Naive thymus-derived CD4-positive, alpha-beta T cell (primary cell): ENCODE measurements at regions of chr13 and their contacts with region 1.

Region 1: DNA sequence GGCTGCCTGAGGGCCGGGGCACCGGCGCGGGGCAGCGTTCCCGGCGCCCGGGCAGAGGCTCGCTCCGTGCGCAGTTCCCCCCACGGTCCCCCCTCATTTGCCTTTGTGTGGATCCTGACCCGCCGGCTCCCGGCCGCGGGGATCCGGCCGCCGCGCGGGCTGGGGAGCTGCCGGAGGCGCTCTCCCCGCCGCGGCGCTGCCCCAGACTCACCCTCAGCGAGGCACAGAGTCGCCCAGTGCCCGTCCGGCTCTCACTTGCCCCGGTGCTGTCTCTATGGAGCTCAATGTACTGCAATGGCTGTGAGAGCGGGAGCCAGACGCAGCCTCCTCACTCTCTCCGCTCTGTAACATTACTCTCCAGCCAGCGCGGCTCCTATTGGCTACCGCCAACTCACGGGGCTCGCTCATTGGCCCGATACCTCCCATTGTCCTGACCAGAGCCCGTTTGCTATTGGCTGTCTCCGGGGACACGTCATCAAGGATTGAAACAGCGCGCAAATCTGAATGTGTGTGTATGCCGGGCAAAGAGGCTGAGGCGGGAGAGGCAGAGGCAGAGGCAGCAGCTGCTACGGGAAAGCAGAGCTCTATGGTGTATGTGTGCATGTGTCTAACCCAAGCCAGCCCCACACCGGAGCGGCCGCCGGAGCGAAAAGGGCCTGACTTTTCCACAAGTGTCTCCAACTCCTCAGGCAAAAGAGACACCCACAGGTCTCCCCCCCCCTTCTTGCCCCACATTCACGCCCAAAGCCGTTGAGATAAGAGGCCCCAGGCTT is at the start of gene HMGB1:
- DNase-seq: peak; percentile 84 to 98 (median 96)
- ATAC-seq: peak; percentile 90
- H3K4me3 ChIP-seq: peak within 1 kb of the TSS; percentile 83
- H3K4me3 Mint-ChIP-seq: peak within 1 kb of the TSS; percentile 86 to 99 (median 94)
- H3K27ac ChIP-seq: peak within 1 kb of the TSS; percentile 97
- H3K27ac Mint-ChIP-seq: peak within 1 kb of the TSS; percentile 93 to 100 (median 98)
- H3K4me1 ChIP-seq: peaks cover 23 to 32% of the 10 kb centered on the region in 2 donors
- H3K4me1 Mint-ChIP-seq: peaks cover 12 to 40% (median 30%) of the 10 kb centered on the region in 7 donors
- H3K27me3 ChIP-seq: no peaks in the 10 kb centered on the region
- H3K27me3 Mint-ChIP-seq: peaks cover 0 to 7% (median 0%) of the 10 kb centered on the region in 5 donors
- total RNA-seq, gene HMGB1: 294 to 530 (median 319) TPM

Region 2: GRCh38 chr13:29508130-29508875 is 957.5 kb before region 1 on chr13:
- CTCF ChIA-PET with region 1: no interaction called
- POLR2A ChIA-PET with region 1: no interaction called
- intact Hi-C with region 1: loop called in 1 of 2 experiments (anchors 5 kb)
- DNase-seq: peak; percentile 32 to 74 (median 61)
- ATAC-seq: peak; percentile 76
- H3K4me3 ChIP-seq: no peak overlapping the region
- H3K4me3 Mint-ChIP-seq: no peak overlapping the region
- H3K27ac ChIP-seq: no peak overlapping the region
- H3K27ac Mint-ChIP-seq: peak overlapping the region in 1 of 9 donors; percentile 21
- H3K4me1 ChIP-seq: no peaks in the 10 kb centered on the region
- H3K4me1 Mint-ChIP-seq: peaks cover 0 to 2% (median under 1%) of the 10 kb centered on the region in 7 donors
- H3K27me3 ChIP-seq: no peaks in the 10 kb centered on the region
- H3K27me3 Mint-ChIP-seq: peaks cover 3 to 6% (median 5%) of the 10 kb centered on the region in 5 donors

Region 3: DNA sequence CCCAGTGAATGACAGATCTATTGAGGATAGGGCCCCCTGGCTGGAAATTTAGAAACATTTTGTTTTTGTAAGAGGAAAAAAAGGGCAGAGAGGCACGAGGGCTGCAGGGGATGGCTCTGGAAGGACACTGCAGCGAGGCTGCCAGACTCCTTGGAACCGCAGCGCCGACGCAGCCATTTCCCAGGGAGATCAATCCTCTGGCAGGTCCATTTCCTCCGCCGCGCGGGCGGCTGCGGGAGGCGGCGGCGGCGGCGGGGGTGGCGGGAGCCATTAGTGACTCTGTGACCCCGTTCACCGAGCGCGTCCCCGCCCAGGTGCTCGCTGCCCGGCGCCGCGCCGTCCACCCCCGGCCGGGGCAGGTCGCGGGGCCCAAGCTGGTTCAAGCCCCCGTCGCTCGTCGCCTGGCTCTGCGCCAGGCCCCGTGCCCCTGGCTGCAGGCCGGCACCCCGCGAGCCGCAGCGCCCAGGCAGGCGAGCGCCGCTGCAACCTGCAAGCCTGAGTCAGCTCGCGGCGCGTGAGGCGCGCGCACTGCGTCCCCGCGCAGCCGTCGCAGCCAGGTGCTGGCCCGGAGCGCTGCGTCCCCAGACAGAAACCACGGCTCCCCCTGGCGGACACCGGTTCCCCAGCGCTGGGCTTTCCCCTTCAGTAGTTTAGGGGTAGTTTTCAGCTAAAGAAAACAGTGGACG is 351.1 kb before region 1 on chr13:
- CTCF ChIA-PET with region 1: interaction called, 3 read pairs
- POLR2A ChIA-PET with region 1: interaction called, 6 read pairs
- intact Hi-C with region 1: loop called (anchors 1 kb)
- DNase-seq: peak; percentile 81 to 94 (median 91)
- ATAC-seq: peak; percentile 95
- H3K4me3 ChIP-seq: peak overlapping the region; percentile 48
- H3K4me3 Mint-ChIP-seq: peak overlapping the region; percentile 74 to 89 (median 84)
- H3K27ac ChIP-seq: peak overlapping the region; percentile 39
- H3K27ac Mint-ChIP-seq: peak overlapping the region in 8 of 9 donors; percentile 43 to 90 (median 80)
- H3K4me1 ChIP-seq: peaks cover 10 to 17% of the 10 kb centered on the region in 2 donors
- H3K4me1 Mint-ChIP-seq: peaks cover 17 to 41% (median 34%) of the 10 kb centered on the region in 7 donors
- H3K27me3 ChIP-seq: no peaks in the 10 kb centered on the region
- H3K27me3 Mint-ChIP-seq: peaks cover 0 to 11% (median 0%) of the 10 kb centered on the region in 5 donors

Region 4: GRCh38 chr13:30257468-30258099 is 208.2 kb before region 1 on chr13:
- CTCF ChIA-PET with region 1: no interaction called
- POLR2A ChIA-PET with region 1: no interaction called
- intact Hi-C with region 1: loop called in 1 of 2 experiments (anchors 1 kb)
- DNase-seq: no peak
- ATAC-seq: no peak
- H3K4me3 ChIP-seq: no peak overlapping the region
- H3K4me3 Mint-ChIP-seq: no peak overlapping the region
- H3K27ac ChIP-seq: no peak overlapping the region
- H3K27ac Mint-ChIP-seq: peak overlapping the region in 2 of 9 donors; percentile 18 to 62
- H3K4me1 ChIP-seq: no peaks in the 10 kb centered on the region
- H3K4me1 Mint-ChIP-seq: peaks cover 0 to 21% (median 14%) of the 10 kb centered on the region in 7 donors
- H3K27me3 ChIP-seq: no peaks in the 10 kb centered on the region
- H3K27me3 Mint-ChIP-seq: no peaks in the 10 kb centered on the region

Region 5: GRCh38 chr13:30388406-30389283 is 77.1 kb before region 1 on chr13:
- CTCF ChIA-PET with region 1: interaction called, 8 read pairs
- POLR2A ChIA-PET with region 1: interaction called, 4 read pairs
- intact Hi-C with region 1: loop called in 1 of 2 experiments (anchors 1 kb)
- DNase-seq: no peak
- ATAC-seq: peak; percentile 13
- H3K4me3 ChIP-seq: peak overlapping the region; percentile 41
- H3K4me3 Mint-ChIP-seq: peak overlapping the region; percentile 67 to 93 (median 78)
- H3K27ac ChIP-seq: peak overlapping the region; percentile 51
- H3K27ac Mint-ChIP-seq: peak overlapping the region; percentile 68 to 95 (median 90)
- H3K4me1 ChIP-seq: peaks cover 6 to 40% of the 10 kb centered on the region in 2 donors
- H3K4me1 Mint-ChIP-seq: peaks cover 26 to 68% (median 57%) of the 10 kb centered on the region in 7 donors
- H3K27me3 ChIP-seq: no peaks in the 10 kb centered on the region
- H3K27me3 Mint-ChIP-seq: no peaks in the 10 kb centered on the region

Region 6: GRCh38 chr13:30529085-30529834 is 63.5 kb after region 1 on chr13:
- CTCF ChIA-PET with region 1: no interaction called
- POLR2A ChIA-PET with region 1: no interaction called
- intact Hi-C with region 1: loop called in 1 of 2 experiments (anchors 2 kb)
- DNase-seq: no peak
- ATAC-seq: no peak
- H3K4me3 ChIP-seq: no peak overlapping the region
- H3K4me3 Mint-ChIP-seq: no peak overlapping the region
- H3K27ac ChIP-seq: no peak overlapping the region
- H3K27ac Mint-ChIP-seq: no peak overlapping the region
- H3K4me1 ChIP-seq: peaks cover 0 to 4% of the 10 kb centered on the region in 2 donors
- H3K4me1 Mint-ChIP-seq: peaks cover 5 to 18% (median 12%) of the 10 kb centered on the region in 7 donors
- H3K27me3 ChIP-seq: no peaks in the 10 kb centered on the region
- H3K27me3 Mint-ChIP-seq: no peaks in the 10 kb centered on the region

Region 7: DNA sequence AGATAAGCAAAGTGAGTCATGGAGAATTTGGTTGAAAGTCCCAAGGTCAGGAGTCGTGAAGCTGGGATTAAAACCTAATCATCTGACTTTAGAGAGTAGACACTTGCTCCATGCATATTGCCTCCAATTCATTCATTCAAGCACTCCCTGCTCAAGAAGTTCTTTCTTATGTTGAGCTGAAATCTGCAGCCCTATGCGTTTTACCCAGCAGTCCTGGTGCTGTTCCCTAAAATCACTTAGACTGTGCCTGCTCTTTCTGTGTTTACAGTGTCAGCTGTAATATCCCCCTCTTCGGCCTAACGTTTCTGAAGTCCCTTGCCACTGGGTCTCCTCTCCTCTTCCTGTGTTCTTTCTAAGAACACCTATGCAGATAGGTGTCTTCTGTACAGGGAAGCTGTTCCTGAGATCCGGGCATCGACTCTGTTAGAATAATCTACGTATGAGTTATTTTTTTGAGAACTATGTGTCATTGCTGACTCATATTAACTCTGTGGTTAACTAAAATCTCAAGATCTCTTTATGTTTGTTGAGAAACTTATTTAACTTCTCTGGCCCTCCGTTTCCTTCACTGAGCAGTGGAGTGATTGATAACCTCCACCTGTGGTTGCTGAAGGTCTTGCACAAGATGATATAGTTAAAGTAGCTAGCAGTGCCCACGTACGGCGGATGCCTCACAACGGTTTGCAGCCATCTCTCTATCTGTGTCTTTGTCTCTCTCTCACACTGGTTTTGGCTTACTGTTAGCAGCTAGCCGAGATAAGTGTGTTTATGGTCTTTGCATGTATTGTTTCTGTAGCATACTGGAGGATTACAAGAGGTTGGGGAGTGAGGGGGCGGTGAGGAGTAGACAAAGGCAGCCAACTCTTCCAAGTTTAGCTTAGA is 274.2 kb after region 1 on chr13:
- CTCF ChIA-PET with region 1: no interaction called
- POLR2A ChIA-PET with region 1: interaction called, 3 read pairs
- intact Hi-C with region 1: loop called (anchors 1 to 2 kb)
- DNase-seq: peak in 8 of 9 donors; percentile 16 to 61 (median 32)
- ATAC-seq: peak; percentile 47
- H3K4me3 ChIP-seq: peak overlapping the region; percentile 29
- H3K4me3 Mint-ChIP-seq: peak overlapping the region; percentile 79 to 87 (median 82)
- H3K27ac ChIP-seq: no peak overlapping the region
- H3K27ac Mint-ChIP-seq: peak overlapping the region; percentile 7 to 93 (median 66)
- H3K4me1 ChIP-seq: peaks cover 59 to 60% of the 10 kb centered on the region in 2 donors
- H3K4me1 Mint-ChIP-seq: peaks cover 68 to 81% (median 79%) of the 10 kb centered on the region in 7 donors
- H3K27me3 ChIP-seq: no peaks in the 10 kb centered on the region
- H3K27me3 Mint-ChIP-seq: no peaks in the 10 kb centered on the region

Region 8: GRCh38 chr13:31199849-31200636 is 734.3 kb after region 1 on chr13 and contains the start of gene B3GLCT:
- CTCF ChIA-PET with region 1: no interaction called
- POLR2A ChIA-PET with region 1: no interaction called
- intact Hi-C with region 1: no loop called
- DNase-seq: peak; percentile 70 to 90 (median 86)
- ATAC-seq: peak; percentile 88
- H3K4me3 ChIP-seq: peak within 1 kb of the TSS; percentile 65
- H3K4me3 Mint-ChIP-seq: peak within 1 kb of the TSS; percentile 83 to 92 (median 89)
- H3K27ac ChIP-seq: peak within 1 kb of the TSS; percentile 82
- H3K27ac Mint-ChIP-seq: peak within 1 kb of the TSS; percentile 78 to 94 (median 92)
- H3K4me1 ChIP-seq: peaks cover 5 to 6% of the 10 kb centered on the region in 2 donors
- H3K4me1 Mint-ChIP-seq: peaks cover 13 to 28% (median 23%) of the 10 kb centered on the region in 7 donors
- H3K27me3 ChIP-seq: no peaks in the 10 kb centered on the region
- H3K27me3 Mint-ChIP-seq: peaks cover 0 to 19% (median 0%) of the 10 kb centered on the region in 5 donors
- total RNA-seq, gene B3GLCT: 3.7 to 4.6 (median 4.4) TPM